ENCODE measurements at regions of chr4 and their contacts with region 1.

Region 1: DNA sequence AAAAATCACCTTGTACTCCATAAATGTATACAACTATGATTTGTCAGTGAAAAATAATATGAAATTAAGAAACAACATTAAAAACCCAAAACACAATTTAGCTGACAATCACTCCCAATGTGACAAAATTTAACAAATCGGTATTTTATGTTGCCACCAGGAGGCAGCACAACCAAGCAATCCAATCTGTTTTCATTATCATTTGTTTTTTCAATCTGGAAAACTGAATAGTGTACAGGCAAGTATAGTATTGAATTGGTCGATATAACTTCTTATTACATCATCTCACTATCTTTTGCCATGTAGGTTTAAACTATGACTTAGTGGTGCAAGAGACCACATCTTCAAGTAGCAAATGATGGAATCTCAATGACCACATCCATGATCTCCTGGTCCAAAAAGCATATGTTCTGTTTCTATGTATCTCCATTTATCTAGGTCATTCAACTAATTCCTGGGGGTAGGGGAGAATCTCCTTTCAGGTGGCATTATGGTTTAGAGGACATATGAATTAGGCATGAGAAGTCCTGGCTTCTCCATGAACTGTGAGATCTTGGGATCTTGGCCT is 112.9 kb upstream of the AGA start:
- DNase-seq: peak; percentile 32
- CTCF ChIP-seq: peak; percentile 66

Region 2: DNA sequence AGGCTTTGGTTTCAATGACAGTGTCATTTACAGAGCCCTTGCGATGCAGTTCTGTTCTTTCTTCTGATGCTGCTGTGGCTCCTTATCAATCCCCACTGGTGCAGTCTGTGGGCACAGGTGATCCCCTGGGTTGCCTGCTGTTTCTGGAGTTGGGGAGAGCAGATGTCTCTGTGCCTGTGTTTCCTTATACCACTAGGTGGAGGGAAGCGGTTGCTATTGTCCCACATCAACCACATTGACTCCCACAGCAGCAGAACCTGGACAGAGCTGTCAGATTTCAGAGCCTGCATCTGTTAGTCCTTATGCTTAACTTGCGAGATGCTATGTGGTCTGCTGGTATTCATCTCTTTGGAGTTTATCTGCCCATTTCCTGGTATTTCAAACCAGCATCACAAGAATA is 187.8 kb before region 1 on chr4:
- CTCF ChIA-PET with region 1: no interaction called
- POLR2A ChIA-PET with region 1: no interaction called
- DNase-seq: no peak
- CTCF ChIP-seq: no peak

Region 3: DNA sequence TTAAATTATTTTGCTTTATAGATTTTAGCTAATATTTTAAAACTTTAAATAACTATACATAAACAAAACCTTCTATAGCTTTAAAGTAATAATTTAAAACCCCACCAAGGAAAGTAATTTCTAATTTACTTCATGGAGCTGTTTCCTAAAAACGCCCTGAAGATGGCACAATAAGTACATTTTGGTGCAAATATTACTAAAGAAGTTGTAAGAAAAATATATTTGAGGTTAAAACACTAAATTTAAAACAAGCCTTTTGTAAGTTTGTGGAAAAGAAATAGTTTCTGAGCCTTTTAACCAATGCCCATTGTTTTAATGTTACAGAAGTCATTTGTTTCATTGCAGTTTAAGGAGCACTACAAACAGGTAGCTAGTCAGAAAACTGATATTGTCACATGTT is 24.6 kb after region 1 on chr4:
- CTCF ChIA-PET with region 1: no interaction called
- POLR2A ChIA-PET with region 1: no interaction called
- DNase-seq: no peak
- CTCF ChIP-seq: no peak

Region 4: GRCh38 chr4:177611974-177612664 is 57.0 kb after region 1 on chr4:
- CTCF ChIA-PET with region 1: no interaction called
- POLR2A ChIA-PET with region 1: no interaction called
- DNase-seq: no peak
- CTCF ChIP-seq: no peak

Region 5: GRCh38 chr4:178086320-178086719 is 531.2 kb after region 1 on chr4:
- CTCF ChIA-PET with region 1: no interaction called
- POLR2A ChIA-PET with region 1: no interaction called
- DNase-seq: no peak
- CTCF ChIP-seq: no peak

Region 6: GRCh38 chr4:179307297-179308136 is 1752.4 kb after region 1 on chr4:
- CTCF ChIA-PET with region 1: interaction called, 17 read pairs
- POLR2A ChIA-PET with region 1: no interaction called
- DNase-seq: peak; percentile 15
- CTCF ChIP-seq: peak; percentile 64

Measured in GM10248 (cell line).